Heart right ventricle (tissue), 16 donors: ENCODE measurements at regions of chr14 and their contacts with region 1.

Region 1: DNA sequence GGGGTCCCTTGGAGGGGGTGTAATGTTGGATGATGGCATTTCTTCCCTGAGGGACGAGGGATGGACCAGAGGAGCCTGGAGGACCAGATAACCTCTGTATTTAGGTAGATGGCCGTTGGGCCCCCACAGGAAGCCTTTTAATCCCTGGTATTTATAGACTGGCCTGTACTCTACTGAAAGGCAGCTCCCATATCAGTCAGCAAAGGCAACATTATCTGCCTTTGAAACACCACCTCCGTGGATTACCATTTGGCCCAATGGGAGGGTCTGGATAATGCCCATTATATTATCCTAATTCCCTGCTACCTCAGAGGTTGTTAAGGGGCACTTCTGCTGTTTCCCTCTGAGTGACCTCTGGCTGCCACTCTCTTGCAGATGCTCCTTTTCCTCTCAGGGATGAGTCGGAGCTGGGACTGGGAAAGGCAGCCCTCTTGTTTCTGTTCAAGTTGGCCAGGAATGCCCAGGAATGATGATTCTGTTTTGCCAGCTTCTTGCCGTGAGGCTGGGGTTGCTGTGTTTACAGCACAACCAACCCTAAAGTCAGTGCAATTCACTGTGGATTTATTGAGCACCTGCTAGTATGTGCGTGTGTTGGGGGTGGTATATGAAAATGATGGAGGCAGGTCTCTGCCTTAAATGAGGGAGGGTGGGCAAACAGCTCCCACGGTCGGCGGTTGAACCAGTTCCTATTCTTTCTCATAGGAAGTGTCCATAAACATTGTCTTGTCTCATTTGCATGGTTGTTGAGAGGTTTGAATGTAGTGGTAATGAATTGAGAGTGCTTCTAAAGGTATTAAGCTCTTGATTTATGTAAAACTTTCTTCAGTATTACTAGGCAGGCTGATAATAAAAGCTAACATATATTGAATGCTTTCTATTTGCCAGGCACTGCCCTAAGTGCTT is 18.1 kb downstream of the SUSD6 start:
- DNase-seq: no peak
- ATAC-seq: peak in 4 of 8 donors; percentile 7 to 58 (median 44)
- H3K4me3 ChIP-seq: no peak overlapping the region
- H3K27ac ChIP-seq: peak overlapping the region in 7 of 10 donors; percentile 17 to 47 (median 31)
- H3K4me1 ChIP-seq: peaks cover 36 to 100% (median 98%) of the 10 kb centered on the region in 9 donors
- H3K27me3 ChIP-seq: no peaks in the 10 kb centered on the region
- CTCF ChIP-seq: no peak

Region 2: GRCh38 chr14:69673578-69674305 is 44.3 kb after region 1 on chr14:
- intact Hi-C with region 1: loop called in 1 of 10 experiments (anchors 5 kb)
- DNase-seq: no peak
- ATAC-seq: peak in 7 of 8 donors; percentile 19 to 51 (median 27)
- H3K4me3 ChIP-seq: peak overlapping the region in 3 of 10 donors; percentile 9 to 35 (median 24)
- H3K27ac ChIP-seq: peak overlapping the region; percentile 24 to 78 (median 70)
- H3K4me1 ChIP-seq: peaks cover 43 to 98% (median 79%) of the 10 kb centered on the region in 9 donors
- H3K27me3 ChIP-seq: no peaks in the 10 kb centered on the region
- CTCF ChIP-seq: peak in 1 of 9 donors; percentile 9